ENCODE measurements at regions of chr1 and their contacts with region 1.

Region 1: GRCh38 chr1:175481126-175482066 is 262.0 kb downstream of the TNR start:
- DNase-seq: no peak
- H3K4me3 Mint-ChIP-seq: no peak overlapping the region
- H3K27ac Mint-ChIP-seq: no peak overlapping the region
- H3K4me1 Mint-ChIP-seq: no peaks in the 10 kb centered on the region
- H3K27me3 Mint-ChIP-seq: peaks cover 19% of the 10 kb centered on the region

Region 2: DNA sequence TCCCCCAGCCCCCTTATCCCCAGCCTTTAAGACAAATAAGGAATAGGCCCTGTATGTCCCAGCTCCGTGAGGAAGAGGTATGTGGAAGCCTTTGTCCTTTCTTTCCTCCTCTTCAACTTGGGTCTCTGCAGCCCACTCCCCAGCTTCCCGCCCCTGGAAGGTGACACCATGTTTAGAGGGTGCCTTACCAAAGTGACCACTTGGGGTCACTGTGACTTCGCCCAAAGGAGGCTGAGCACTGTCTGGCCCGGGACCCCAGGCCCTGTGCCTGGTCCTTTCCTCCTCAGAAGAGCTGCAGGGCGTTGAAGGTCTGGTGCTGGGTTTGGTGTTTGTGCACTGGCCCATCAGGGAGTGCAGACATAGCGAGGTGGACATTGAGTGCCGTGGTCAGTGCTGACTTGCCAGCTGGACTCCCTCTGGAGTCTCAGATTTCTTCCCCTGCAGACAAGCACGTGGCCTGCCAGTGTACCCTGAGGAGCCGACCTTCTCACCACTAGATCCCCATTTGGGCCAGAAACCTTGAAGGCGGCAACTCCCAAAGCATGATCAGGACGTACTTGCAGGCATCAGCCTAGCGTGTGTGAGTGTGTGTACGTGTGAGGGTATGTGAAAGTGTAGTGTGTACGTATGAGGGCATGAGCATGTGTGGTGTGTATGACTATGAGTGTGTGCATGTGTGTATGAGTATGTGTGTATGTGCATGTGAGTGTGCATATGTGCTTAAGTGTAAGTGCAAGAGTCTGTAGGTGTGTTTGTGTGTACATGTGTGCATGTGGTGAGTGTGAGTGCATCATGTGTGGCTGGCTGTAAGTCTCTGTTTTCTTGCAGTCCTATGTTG is 107.4 kb before region 1 on chr1:
- CTCF ChIA-PET with region 1: no interaction called
- intact Hi-C with region 1: loop called (anchors 1 kb)
- DNase-seq: peak; percentile 42
- H3K4me3 Mint-ChIP-seq: no peak overlapping the region
- H3K27ac Mint-ChIP-seq: no peak overlapping the region
- H3K4me1 Mint-ChIP-seq: no peaks in the 10 kb centered on the region
- H3K27me3 Mint-ChIP-seq: peaks cover 13% of the 10 kb centered on the region

Region 3: DNA sequence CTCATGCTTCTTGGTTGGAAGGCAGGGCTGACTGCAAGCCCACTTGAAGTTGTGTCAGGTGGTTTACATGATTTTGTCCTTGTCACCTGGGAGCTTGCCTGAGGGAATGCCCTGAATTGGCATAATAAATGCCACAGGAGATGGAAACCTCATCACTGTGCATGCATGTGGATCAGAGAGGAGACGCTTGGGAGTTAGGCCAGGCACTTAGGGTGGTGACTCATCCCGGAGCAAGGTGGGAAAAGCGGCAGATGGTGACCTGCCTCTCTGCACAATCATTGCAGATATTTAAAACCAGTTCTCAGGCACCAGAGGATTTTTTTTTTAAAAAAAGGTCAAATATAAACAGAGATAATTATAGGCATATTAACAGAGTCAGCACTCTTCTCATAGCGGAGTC is 86.7 kb before region 1 on chr1:
- CTCF ChIA-PET with region 1: no interaction called
- intact Hi-C with region 1: no loop called
- DNase-seq: no peak
- H3K4me3 Mint-ChIP-seq: no peak overlapping the region
- H3K27ac Mint-ChIP-seq: no peak overlapping the region
- H3K4me1 Mint-ChIP-seq: no peaks in the 10 kb centered on the region
- H3K27me3 Mint-ChIP-seq: no peaks in the 10 kb centered on the region

Region 4: GRCh38 chr1:175824079-175824478 is 342.7 kb after region 1 on chr1:
- CTCF ChIA-PET with region 1: no interaction called
- intact Hi-C with region 1: loop called (anchors 10 kb)
- DNase-seq: peak; percentile 59
- H3K4me3 Mint-ChIP-seq: no peak overlapping the region
- H3K27ac Mint-ChIP-seq: no peak overlapping the region
- H3K4me1 Mint-ChIP-seq: no peaks in the 10 kb centered on the region
- H3K27me3 Mint-ChIP-seq: peaks cover 10% of the 10 kb centered on the region

Region 5: GRCh38 chr1:176073524-176074157 is 592.2 kb after region 1 on chr1:
- CTCF ChIA-PET with region 1: no interaction called
- intact Hi-C with region 1: loop called (anchors 5 kb)
- DNase-seq: peak; percentile 47
- H3K4me3 Mint-ChIP-seq: no peak overlapping the region
- H3K27ac Mint-ChIP-seq: no peak overlapping the region
- H3K4me1 Mint-ChIP-seq: peaks cover 3% of the 10 kb centered on the region
- H3K27me3 Mint-ChIP-seq: no peaks in the 10 kb centered on the region